Caco-2 (cell line): ENCODE measurements at regions of chr1 and their contacts with region 1.

Region 1: GRCh38 chr1:161209790-161210409 is 5.2 kb upstream of the FCER1G start:
- DNase-seq: peak; percentile 89 to 92
- H3K4me3 ChIP-seq: no peak overlapping the region
- H3K4me3 Mint-ChIP-seq: no peak overlapping the region
- H3K27ac Mint-ChIP-seq: peak overlapping the region; percentile 29
- H3K4me1 ChIP-seq: peaks cover 17% of the 10 kb centered on the region
- H3K4me1 Mint-ChIP-seq: peaks cover 30% of the 10 kb centered on the region
- H3K27me3 ChIP-seq: no peaks in the 10 kb centered on the region
- H3K27me3 Mint-ChIP-seq: no peaks in the 10 kb centered on the region
- CTCF ChIP-seq: peak; percentile 93 to 95

Region 2: GRCh38 chr1:161292631-161293030 is 82.7 kb after region 1 on chr1:
- CTCF ChIA-PET with region 1: interaction called, 3 read pairs
- POLR2A ChIA-PET with region 1: no interaction called
- intact Hi-C with region 1: loop called (anchors 1 kb)
- DNase-seq: no peak
- H3K4me3 ChIP-seq: no peak overlapping the region
- H3K4me3 Mint-ChIP-seq: no peak overlapping the region
- H3K27ac Mint-ChIP-seq: no peak overlapping the region
- H3K4me1 ChIP-seq: peaks cover 14% of the 10 kb centered on the region
- H3K4me1 Mint-ChIP-seq: peaks cover 22% of the 10 kb centered on the region
- H3K27me3 ChIP-seq: no peaks in the 10 kb centered on the region
- H3K27me3 Mint-ChIP-seq: no peaks in the 10 kb centered on the region
- CTCF ChIP-seq: no peak

Region 3: DNA sequence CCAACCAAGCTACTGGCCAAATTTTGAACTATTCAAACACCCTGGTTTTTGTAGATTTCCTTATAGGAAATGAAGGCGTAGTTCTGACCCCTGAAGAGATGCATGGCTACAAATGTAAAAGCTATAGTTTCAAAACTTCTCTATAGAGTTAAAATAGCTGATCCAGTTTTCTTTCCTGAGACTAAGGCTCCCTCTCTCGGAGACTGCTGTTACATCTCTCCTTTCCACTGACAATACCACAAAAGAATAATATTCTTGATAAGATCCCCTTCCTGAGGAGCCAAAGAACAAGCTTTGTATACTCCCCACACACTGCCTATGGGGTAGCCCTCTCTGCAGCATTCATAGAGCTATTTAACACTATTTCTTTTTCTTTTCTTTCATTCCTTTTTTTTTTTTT is 164.5 kb after region 1 on chr1:
- CTCF ChIA-PET with region 1: no interaction called
- POLR2A ChIA-PET with region 1: interaction called, 4 read pairs
- intact Hi-C with region 1: loop called (anchors 1 kb)
- DNase-seq: peak in 1 of 2 experiments; percentile 14
- H3K4me3 ChIP-seq: no peak overlapping the region
- H3K4me3 Mint-ChIP-seq: no peak overlapping the region
- H3K27ac Mint-ChIP-seq: no peak overlapping the region
- H3K4me1 ChIP-seq: peaks cover 15% of the 10 kb centered on the region; the same call in 1 of the 2 replicates
- H3K4me1 Mint-ChIP-seq: no peaks in the 10 kb centered on the region
- H3K27me3 ChIP-seq: no peaks in the 10 kb centered on the region
- H3K27me3 Mint-ChIP-seq: no peaks in the 10 kb centered on the region
- CTCF ChIP-seq: peak; percentile 19 to 44